ENCODE measurements at regions of chr3 and their contacts with region 1.

Region 1: DNA sequence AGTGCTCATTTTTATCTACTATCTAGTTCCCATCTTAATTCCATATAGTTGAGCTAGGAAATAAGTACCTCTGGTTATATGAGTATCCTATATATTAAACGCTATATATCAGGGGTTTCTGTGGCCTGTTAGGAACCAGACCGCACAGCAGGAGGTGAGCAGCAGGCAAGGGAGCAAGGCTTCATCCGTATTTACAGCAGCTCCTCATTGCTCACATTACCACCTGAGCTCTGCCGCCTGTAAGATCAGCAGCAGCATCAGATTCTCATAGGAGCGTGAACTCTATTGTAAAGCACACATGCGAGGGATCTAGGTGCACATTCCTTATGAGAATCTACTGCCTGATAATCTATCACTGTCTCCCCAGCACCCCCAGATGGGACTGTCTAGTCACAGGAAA is 23.0 kb downstream of the GSK3B start:
- DNase-seq: no peak
- CTCF ChIP-seq: no peak

Region 2: DNA sequence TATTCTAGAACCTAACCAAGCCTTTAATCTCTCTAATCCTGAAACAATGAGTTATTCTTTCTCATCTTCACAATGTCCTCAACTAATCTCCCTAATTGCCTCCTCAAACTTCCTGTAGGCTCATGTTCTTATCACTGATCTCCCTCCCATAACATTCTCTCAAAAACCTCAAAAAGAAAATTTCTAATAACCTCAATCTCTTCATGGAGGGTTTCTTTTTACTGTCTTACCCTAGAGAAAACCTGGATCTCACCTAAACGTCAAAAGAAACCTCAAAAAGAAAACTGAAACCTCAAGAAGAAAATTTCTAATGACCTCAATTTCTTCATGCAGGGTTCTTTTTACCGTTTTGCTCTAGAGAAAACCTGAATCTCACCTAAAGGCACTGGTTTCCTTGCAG is 127.2 kb before region 1 on chr3:
- CTCF ChIA-PET with region 1: no interaction called
- POLR2A ChIA-PET with region 1: no interaction called
- DNase-seq: peak; percentile 22
- CTCF ChIP-seq: no peak

Region 3: DNA sequence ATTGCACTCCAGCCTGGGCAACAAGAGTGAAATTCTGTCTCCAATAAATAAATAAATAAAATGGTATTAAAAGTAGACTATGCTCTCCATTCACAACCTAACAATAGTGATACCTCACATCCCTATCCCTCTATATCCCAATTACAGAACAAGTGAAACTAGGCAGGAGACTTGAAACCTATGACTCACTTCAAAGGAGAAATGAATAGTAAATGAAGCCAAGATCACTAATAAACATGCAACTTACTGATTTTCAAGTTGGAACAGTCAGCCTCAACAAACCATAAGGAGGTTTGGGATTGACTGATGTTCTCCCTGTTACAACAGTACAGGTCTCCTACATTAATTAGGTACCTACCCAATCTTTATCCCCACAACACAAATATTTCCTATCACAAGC is 80.4 kb before region 1 on chr3:
- CTCF ChIA-PET with region 1: no interaction called
- POLR2A ChIA-PET with region 1: no interaction called
- DNase-seq: no peak
- CTCF ChIP-seq: no peak

Region 4: GRCh38 chr3:120081719-120082118 is 10.5 kb after region 1 on chr3:
- CTCF ChIA-PET with region 1: interaction called, 14 read pairs
- POLR2A ChIA-PET with region 1: no interaction called
- DNase-seq: peak; percentile 23
- CTCF ChIP-seq: no peak

Region 5: GRCh38 chr3:120382941-120383447 is 311.7 kb after region 1 on chr3:
- CTCF ChIA-PET with region 1: no interaction called
- POLR2A ChIA-PET with region 1: no interaction called
- DNase-seq: no peak
- CTCF ChIP-seq: no peak